ENCODE measurements at regions of chr2 and their contacts with region 1.

Region 1: GRCh38 chr2:98444436-98445176 is at the start of gene INPP4A:
- DNase-seq: peak; percentile 42
- ATAC-seq: peak; percentile 96
- H3K4me3 ChIP-seq: peak within 1 kb of the TSS; percentile 87
- H3K27ac ChIP-seq: peak within 1 kb of the TSS; percentile 54
- H3K4me1 ChIP-seq: peaks cover 6% of the 10 kb centered on the region
- H3K27me3 ChIP-seq: peaks cover 4% of the 10 kb centered on the region
- CTCF ChIP-seq: peak; percentile 32; the same call in 1 of the 2 replicates
- POLR2A ChIP-seq: peak; percentile 72
- RAD21 ChIP-seq: no peak; the same call in 1 of the 2 replicates
- total RNA-seq, gene INPP4A: 22.8 and 27.1 TPM in 2 replicates

Region 2: DNA sequence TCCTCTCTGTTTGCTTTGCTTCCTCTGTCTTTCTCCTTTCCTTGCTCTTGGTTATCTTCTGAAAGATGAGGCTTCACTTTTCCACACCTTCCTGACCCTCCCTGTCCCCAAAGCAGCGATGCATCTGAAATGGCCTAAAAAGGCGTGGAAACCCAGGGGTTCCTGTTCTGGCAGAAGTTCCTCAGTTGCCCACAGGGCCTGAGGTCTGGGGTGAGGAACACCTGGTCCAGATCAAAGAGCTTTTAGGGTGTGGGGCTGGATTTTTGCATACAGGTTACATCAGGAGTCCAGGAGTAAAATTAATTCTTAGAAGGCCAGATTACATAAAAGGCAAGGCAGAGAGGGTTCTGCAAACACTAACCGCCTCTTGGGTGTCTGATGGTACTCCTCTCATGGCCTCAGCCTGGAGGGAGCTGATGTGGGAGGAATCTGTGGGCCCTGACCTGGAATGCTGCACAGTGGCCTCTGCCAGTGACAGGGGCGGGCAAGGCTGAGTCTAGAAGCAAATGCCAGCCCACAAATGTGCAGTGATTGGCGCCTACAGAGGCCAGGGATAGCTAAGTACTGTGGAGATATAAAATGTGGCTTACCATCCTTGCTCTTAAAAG is 41.9 kb after region 1 on chr2:
- CTCF ChIA-PET with region 1: no interaction called
- POLR2A ChIA-PET with region 1: no interaction called
- dilution Hi-C with region 1: no loop called
- in situ Hi-C with region 1: no loop called
- intact Hi-C with region 1: no loop called
- DNase-seq: no peak
- ATAC-seq: peak; percentile 45
- H3K4me3 ChIP-seq: no peak overlapping the region
- H3K27ac ChIP-seq: no peak overlapping the region
- H3K4me1 ChIP-seq: peaks cover 2% of the 10 kb centered on the region; the same call in 1 of the 2 replicates
- H3K27me3 ChIP-seq: no peaks in the 10 kb centered on the region
- CTCF ChIP-seq: no peak
- POLR2A ChIP-seq: no peak
- RAD21 ChIP-seq: no peak

Region 3: GRCh38 chr2:98505311-98505808 is 60.8 kb after region 1 on chr2:
- CTCF ChIA-PET with region 1: no interaction called
- POLR2A ChIA-PET with region 1: no interaction called
- dilution Hi-C with region 1: no loop called
- in situ Hi-C with region 1: no loop called
- intact Hi-C with region 1: no loop called
- DNase-seq: no peak
- ATAC-seq: no peak
- H3K4me3 ChIP-seq: no peak overlapping the region
- H3K27ac ChIP-seq: no peak overlapping the region
- H3K4me1 ChIP-seq: peaks cover 26% of the 10 kb centered on the region
- H3K27me3 ChIP-seq: no peaks in the 10 kb centered on the region
- CTCF ChIP-seq: no peak
- POLR2A ChIP-seq: no peak
- RAD21 ChIP-seq: no peak

Region 4: GRCh38 chr2:98608116-98608999 is 163.8 kb after region 1 on chr2 and contains the starts of genes COA5 and UNC50:
- CTCF ChIA-PET with region 1: no interaction called
- POLR2A ChIA-PET with region 1: no interaction called
- dilution Hi-C with region 1: no loop called
- in situ Hi-C with region 1: no loop called
- intact Hi-C with region 1: loop called (anchors 10 kb)
- DNase-seq: peak; percentile 91
- ATAC-seq: peak; percentile 91
- H3K4me3 ChIP-seq: peak within 1 kb of the TSS; percentile 93
- H3K27ac ChIP-seq: peak within 1 kb of the TSS; percentile 96
- H3K4me1 ChIP-seq: peaks cover 12% of the 10 kb centered on the region
- H3K27me3 ChIP-seq: no peaks in the 10 kb centered on the region
- CTCF ChIP-seq: 0 out of 2 replicates have a peak, but pooled peaks have one; percentile 5
- POLR2A ChIP-seq: peak; percentile 95
- RAD21 ChIP-seq: no peak
- total RNA-seq, gene COA5: 8.4 and 16.4 TPM in 2 replicates
- total RNA-seq, gene UNC50: 18.3 and 40.3 TPM in 2 replicates

Region 5: DNA sequence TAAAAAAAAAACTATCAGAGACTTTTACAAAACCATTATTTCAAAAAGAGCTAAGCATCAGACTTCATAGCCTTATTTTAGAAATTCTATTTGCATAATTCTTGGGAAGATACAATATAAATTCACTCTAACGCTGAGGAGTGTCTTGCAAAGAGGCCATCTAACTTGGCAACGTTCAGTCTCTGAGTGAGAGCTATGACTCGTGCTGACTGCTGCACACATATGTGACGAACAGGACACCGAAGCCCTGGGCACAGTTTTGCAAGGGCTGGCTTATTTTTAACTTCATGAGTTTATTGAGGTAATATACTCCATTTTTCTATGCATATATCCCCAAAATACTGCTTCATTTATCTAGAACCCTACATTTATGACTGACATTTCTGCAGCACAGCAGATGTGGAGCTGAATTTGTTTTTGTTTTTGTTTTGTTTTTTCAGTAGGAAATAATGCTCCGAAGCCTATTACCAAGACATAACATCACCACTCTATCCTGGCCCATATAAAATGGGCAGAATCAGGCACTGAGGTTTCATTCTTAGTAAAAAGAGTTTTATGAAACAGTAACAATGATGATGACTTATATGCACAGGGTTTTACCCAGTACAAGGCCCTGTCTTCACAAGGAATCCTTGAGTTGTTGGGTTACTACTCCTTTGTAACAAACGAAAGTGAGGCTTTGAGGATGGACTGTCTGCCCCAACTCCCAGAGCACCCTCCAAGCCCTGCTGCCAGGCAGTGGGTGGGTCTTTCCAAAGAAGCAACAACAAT is 423.1 kb after region 1 on chr2:
- CTCF ChIA-PET with region 1: no interaction called
- POLR2A ChIA-PET with region 1: no interaction called
- dilution Hi-C with region 1: no loop called
- in situ Hi-C with region 1: no loop called
- intact Hi-C with region 1: no loop called
- DNase-seq: peak; percentile 33
- ATAC-seq: no peak
- H3K4me3 ChIP-seq: no peak overlapping the region
- H3K27ac ChIP-seq: no peak overlapping the region
- H3K4me1 ChIP-seq: peaks cover 1% of the 10 kb centered on the region; the same call in 1 of the 2 replicates
- H3K27me3 ChIP-seq: peaks cover 3% of the 10 kb centered on the region
- CTCF ChIP-seq: no peak
- POLR2A ChIP-seq: no peak
- RAD21 ChIP-seq: no peak

Measured in IMR-90 (cell line).